Left lung (tissue), 14 donors: ENCODE measurements at regions of chr15 and their contacts with region 1.

Region 1: GRCh38 chr15:93030430-93031105 is 58.4 kb downstream of the RGMA start:
- DNase-seq: peak; percentile 64 to 80 (median 72)
- ATAC-seq: peak; percentile 68
- H3K4me3 ChIP-seq: no peak overlapping the region
- H3K27ac ChIP-seq: peak overlapping the region; percentile 19 to 93
- H3K4me1 ChIP-seq: peaks cover 41 to 56% of the 10 kb centered on the region in 2 donors
- H3K27me3 ChIP-seq: no peaks in the 10 kb centered on the region
- CTCF ChIP-seq: peak; percentile 71 to 92

Region 2: DNA sequence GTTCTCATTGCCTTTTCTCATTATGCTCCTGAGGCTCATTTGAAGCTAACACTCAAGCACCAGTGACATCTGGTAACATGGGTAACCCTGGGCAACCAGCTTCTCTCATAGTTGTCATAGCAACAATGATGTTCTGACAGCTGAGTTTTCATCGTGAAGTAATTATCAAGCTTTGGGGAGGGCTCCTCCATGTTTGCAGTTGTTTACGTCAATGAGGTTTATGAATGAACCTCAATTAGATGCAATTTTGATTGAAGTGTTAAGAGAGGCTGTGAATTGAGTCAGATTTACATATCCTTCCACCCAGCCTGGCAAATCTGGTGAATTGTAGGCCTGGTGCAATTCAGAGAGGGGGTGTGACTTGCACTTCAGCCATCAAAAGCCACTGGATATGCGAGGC is 249.7 kb before region 1 on chr15:
- intact Hi-C with region 1: loop called in 1 of 2 experiments (anchors 10 kb)
- DNase-seq: no peak
- ATAC-seq: no peak
- H3K4me3 ChIP-seq: no peak overlapping the region
- H3K27ac ChIP-seq: no peak overlapping the region
- H3K4me1 ChIP-seq: no peaks in the 10 kb centered on the region
- H3K27me3 ChIP-seq: no peaks in the 10 kb centered on the region
- CTCF ChIP-seq: no peak

Region 3: DNA sequence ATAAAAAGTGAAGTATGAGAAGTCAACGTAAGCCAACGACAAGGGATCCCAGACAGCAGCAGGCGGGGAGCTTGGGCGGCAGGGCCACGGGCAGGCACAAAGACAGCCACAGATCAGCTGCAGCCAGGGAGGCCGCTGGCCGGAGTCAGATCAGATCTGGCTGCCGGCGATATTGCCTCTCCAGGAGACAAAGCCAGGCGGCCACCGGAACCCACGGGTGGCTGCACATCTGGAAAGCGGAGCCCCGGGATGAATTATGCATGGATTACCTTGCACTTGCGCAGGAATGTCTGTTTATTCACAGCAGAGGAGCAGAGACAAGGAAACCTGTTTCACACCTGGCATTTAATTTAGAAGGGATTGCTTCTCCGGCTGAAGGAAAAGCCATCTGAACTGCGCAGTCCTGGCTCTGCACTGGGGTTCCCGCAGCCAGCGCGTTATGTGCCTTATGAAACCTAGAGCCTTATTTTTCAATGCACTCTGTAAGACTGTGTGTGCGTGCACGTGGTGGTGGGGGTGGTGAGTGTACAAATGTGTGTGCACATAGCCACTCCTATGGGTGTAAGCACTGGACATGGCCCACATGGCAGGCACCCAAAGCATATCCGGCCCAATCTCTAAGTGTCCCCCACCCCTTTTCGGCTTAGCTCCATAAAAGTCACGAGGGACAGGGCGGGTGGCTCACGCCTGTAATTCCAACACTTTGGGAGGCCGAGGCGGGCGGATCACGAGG is 773.0 kb after region 1 on chr15:
- intact Hi-C with region 1: no loop called
- DNase-seq: peak in 1 of 4 donors; percentile 73
- ATAC-seq: no peak
- H3K4me3 ChIP-seq: no peak overlapping the region
- H3K27ac ChIP-seq: no peak overlapping the region
- H3K4me1 ChIP-seq: no peaks in the 10 kb centered on the region
- H3K27me3 ChIP-seq: no peaks in the 10 kb centered on the region
- CTCF ChIP-seq: no peak

Region 4: DNA sequence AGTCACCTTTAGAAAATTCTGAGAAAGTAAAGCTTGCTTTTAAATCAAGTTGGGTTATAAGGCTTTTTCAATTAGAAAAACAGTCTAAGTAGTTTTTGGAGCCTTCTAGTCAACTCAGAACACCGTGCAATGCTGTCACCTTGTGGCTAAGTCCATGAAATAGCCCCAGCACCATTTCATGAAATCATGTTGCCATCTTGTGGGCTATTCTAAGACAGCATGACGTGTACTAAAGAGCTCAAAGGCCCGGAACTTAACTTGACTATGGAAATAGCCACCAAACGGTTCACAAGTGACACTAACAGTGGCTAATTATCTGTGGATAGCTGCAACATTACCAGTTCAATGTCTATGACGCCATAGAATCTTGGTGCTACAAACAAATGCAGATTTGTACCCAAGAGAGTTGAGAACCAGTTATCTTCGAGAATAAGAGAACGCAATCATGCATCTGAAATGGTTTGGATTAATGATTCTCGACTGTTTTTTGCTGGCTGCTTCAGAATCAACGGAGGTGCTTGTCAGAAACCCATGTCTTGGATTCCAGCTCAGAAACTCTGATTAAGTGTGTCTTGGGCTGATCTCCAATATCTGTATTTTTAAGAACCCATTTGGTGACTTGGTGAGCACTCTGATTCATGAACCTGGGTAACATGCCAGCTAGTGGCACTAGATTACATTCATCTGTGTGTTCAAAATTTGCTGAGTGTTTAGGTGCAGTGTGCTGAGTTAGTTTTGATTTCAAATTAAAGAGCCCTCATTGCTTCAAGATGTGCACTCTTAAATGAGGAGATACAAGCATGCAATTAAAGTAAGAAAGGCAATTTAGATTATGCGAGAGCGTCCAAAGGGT is 1089.6 kb after region 1 on chr15:
- intact Hi-C with region 1: loop called in 1 of 2 experiments (anchors 10 kb)
- DNase-seq: peak in 3 of 4 donors; percentile 45 to 89 (median 78)
- ATAC-seq: peak; percentile 100
- H3K4me3 ChIP-seq: no peak overlapping the region
- H3K27ac ChIP-seq: no peak overlapping the region
- H3K4me1 ChIP-seq: peaks cover 0 to 7% of the 10 kb centered on the region in 2 donors
- H3K27me3 ChIP-seq: no peaks in the 10 kb centered on the region
- CTCF ChIP-seq: peak; percentile 58 to 81